Naive thymus-derived CD8-positive, alpha-beta T cell (primary cell): ENCODE measurements at regions of chr10 and their contacts with region 1.

Region 1: DNA sequence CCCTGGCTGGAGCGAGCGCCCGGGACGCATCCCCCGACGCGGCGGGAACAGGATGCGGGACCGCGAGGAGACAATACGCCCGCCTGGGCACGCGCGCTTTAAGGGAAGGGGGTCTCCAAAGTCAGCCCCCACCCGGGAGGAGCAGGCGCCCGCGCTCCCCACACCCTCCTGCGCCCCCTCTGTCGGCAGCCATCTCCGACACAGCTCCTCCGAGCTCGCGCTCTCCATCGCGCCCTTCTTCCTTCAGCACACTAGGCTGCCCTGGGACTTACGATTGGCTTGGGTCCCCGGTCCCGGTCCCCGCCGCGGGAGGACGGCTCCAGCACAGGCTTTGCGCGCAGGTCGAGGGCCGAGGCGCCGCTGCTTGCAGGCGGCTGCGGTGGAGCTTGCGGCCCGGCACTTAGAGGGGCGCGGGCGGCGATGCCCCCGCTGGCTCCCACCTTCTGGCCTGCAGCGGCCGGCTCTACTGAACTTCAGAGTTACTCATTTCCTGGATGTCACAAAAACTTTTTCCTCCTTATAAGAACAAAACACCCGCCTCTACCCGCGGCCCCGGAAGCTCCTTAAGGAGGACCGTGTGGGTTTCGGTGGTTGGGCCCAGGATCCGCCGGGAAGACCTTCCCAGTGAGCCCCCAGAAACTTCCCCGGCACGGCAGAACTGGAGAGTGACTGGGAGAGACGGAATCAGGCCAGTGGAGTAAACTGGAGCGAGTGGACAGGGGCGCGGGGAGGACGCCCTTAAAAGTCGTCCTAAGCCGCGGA is at the start of gene ITPRIP:
- DNase-seq: peak; percentile 56 to 95 (median 74)
- ATAC-seq: peak; percentile 73 to 78
- H3K4me3 Mint-ChIP-seq: peak within 1 kb of the TSS; percentile 89 to 100 (median 98)
- H3K27ac Mint-ChIP-seq: peak within 1 kb of the TSS; percentile 95 to 100 (median 98)
- H3K4me1 Mint-ChIP-seq: peaks cover 23 to 53% (median 53%) of the 10 kb centered on the region in 4 donors
- H3K27me3 Mint-ChIP-seq: no peaks in the 10 kb centered on the region
- polyA plus RNA-seq, gene ITPRIP: 10.6 to 16.0 (median 15.6) TPM

Region 2: DNA sequence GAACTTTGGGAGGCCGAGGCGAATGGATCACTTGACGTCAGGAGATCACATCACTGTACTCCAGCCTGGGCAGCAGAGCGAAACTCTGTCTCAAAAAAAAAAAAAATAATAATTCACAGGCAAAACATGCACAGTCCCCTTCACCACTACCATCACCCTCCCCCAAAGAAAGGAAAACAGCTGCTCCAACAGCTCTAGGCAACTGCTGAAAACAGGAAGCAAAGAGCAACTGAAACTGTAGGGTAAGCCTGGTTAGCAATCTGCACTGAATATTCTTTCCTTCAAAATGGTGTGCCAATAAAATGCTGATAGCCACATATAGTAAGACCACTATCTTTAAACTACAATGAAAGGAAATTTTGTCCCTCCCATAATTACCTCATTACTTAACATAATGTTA is 1156.9 kb before region 1 on chr10:
- POLR2A ChIA-PET with region 1: no interaction called
- DNase-seq: no peak
- ATAC-seq: peak in 1 of 2 donors; percentile 63
- H3K4me3 Mint-ChIP-seq: peak overlapping the region in 5 of 10 donors; percentile 18 to 52 (median 29)
- H3K27ac Mint-ChIP-seq: peak overlapping the region in 6 of 10 donors; percentile 16 to 80 (median 54)
- H3K4me1 Mint-ChIP-seq: peaks cover 20 to 80% (median 58%) of the 10 kb centered on the region in 4 donors
- H3K27me3 Mint-ChIP-seq: no peaks in the 10 kb centered on the region

Region 3: GRCh38 chr10:104190695-104191094 is 147.5 kb before region 1 on chr10:
- POLR2A ChIA-PET with region 1: no interaction called
- DNase-seq: no peak
- ATAC-seq: no peak
- H3K4me3 Mint-ChIP-seq: no peak overlapping the region
- H3K27ac Mint-ChIP-seq: no peak overlapping the region
- H3K4me1 Mint-ChIP-seq: no peaks in the 10 kb centered on the region
- H3K27me3 Mint-ChIP-seq: peaks cover 0 to 18% (median 16%) of the 10 kb centered on the region in 5 donors

Region 4: DNA sequence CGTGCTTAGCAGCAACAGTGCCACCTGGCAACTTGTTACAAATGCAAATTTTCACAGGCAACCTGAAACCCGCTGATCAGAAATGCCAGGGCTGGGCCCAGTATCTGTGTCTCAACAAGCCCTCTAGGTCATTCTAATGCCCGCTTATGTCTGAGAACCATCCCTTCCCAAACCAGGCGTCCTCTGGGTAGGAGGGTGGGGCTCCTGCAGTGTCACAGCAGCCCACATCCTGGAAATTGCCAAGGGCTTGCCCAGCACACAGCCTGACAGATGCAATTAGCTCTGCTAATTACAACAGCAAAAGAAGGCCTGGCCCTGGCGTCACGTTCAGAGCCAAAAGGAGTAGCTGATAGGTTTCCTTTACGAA is 15.8 kb before region 1 on chr10:
- POLR2A ChIA-PET with region 1: interaction called, 47 read pairs
- DNase-seq: no peak
- ATAC-seq: peak; percentile 36 to 46
- H3K4me3 Mint-ChIP-seq: peak overlapping the region; percentile 64 to 89 (median 85)
- H3K27ac Mint-ChIP-seq: peak overlapping the region; percentile 89 to 98 (median 94)
- H3K4me1 Mint-ChIP-seq: peaks cover 61 to 100% (median 100%) of the 10 kb centered on the region in 4 donors
- H3K27me3 Mint-ChIP-seq: no peaks in the 10 kb centered on the region

Region 5: DNA sequence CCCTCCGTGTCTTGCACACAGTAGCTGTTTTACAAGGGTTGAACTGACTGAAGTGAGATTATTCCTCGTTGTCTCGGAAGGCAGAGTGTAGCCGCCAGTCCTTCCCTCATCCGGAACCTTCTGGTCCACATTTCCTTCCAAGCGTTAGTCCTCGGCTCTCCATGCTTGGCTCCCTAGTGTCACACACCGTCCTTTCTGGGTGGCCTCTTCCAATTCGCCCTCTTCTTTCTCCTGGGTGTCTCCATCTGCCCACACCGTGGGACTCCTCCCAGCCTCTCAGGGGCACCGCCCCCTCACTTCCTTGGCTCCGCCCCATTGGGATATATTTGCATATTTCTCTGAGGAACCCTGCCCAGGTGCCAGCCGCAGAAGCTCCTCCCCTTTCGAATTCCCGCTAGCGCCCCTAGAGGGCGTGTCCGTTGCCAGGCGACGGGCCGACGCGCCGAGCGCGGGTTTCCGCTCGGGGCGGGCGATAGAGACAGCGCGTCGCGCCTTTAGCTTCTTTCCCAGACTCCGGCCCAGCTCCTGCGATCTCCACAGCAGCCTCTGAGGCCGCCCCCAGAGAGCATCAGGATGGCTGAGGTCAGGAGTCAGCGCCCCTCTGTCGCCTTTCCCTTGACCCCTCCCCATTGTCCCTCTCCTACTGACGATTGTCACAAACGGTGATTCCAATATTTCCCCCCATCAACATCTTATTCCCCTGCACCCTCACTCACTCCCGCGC is 15.3 kb after region 1 on chr10 and contains the start of gene CFAP58:
- POLR2A ChIA-PET with region 1: interaction called, 19 read pairs
- DNase-seq: peak; percentile 78 to 93 (median 86)
- ATAC-seq: peak; percentile 88 to 89
- H3K4me3 Mint-ChIP-seq: peak within 1 kb of the TSS in 5 of 10 donors; percentile 0 to 49 (median 35)
- H3K27ac Mint-ChIP-seq: peak within 1 kb of the TSS in 2 of 10 donors; percentile 47 to 72
- H3K4me1 Mint-ChIP-seq: peaks cover 2 to 6% (median 5%) of the 10 kb centered on the region in 4 donors
- H3K27me3 Mint-ChIP-seq: no peaks in the 10 kb centered on the region
- polyA plus RNA-seq, gene CFAP58: not detected